Activated CD4-positive, alpha-beta T cell treated with anti-CD3 and anti-CD28 coated beads for 36 hours (primary cell): ENCODE measurements at regions of chr10 and their contacts with region 1.

Region 1: GRCh38 chr10:99732033-99732912 is at the starts of genes COX15 and CUTC:
- DNase-seq: peak; percentile 97
- ATAC-seq: peak; percentile 94
- H3K4me3 Mint-ChIP-seq: peak within 1 kb of the TSS; percentile 93
- H3K27ac Mint-ChIP-seq: peak within 1 kb of the TSS; percentile 98
- H3K4me1 Mint-ChIP-seq: peaks cover 32% of the 10 kb centered on the region
- H3K27me3 Mint-ChIP-seq: no peaks in the 10 kb centered on the region
- total RNA-seq, gene COX15: 28.1 to 35.5 TPM
- total RNA-seq, gene CUTC: 24.6 to 35.8 TPM

Region 2: GRCh38 chr10:99430451-99431189 is 301.7 kb before region 1 on chr10 and contains the start of gene GOT1:
- CTCF ChIA-PET with region 1: interaction called, 5 read pairs
- POLR2A ChIA-PET with region 1: interaction called, 3 read pairs
- intact Hi-C with region 1: loop called (anchors 1 kb)
- DNase-seq: peak; percentile 97
- ATAC-seq: peak; percentile 96
- H3K4me3 Mint-ChIP-seq: peak within 1 kb of the TSS; percentile 94
- H3K27ac Mint-ChIP-seq: peak within 1 kb of the TSS; percentile 98
- H3K4me1 Mint-ChIP-seq: peaks cover 32% of the 10 kb centered on the region
- H3K27me3 Mint-ChIP-seq: no peaks in the 10 kb centered on the region
- total RNA-seq, gene GOT1: 51.7 to 83.5 TPM

Region 3: GRCh38 chr10:99659031-99659867 is 73.0 kb before region 1 on chr10 and contains the start of gene ENTPD7:
- CTCF ChIA-PET with region 1: no interaction called
- POLR2A ChIA-PET with region 1: interaction called, 15 read pairs
- intact Hi-C with region 1: loop called (anchors 1 to 5 kb)
- DNase-seq: peak; percentile 96
- ATAC-seq: peak; percentile 99
- H3K4me3 Mint-ChIP-seq: peak within 1 kb of the TSS; percentile 84
- H3K27ac Mint-ChIP-seq: peak within 1 kb of the TSS; percentile 85
- H3K4me1 Mint-ChIP-seq: peaks cover 22% of the 10 kb centered on the region
- H3K27me3 Mint-ChIP-seq: peaks cover 12% of the 10 kb centered on the region
- total RNA-seq, gene ENTPD7: 2.5 to 2.7 TPM

Region 4: GRCh38 chr10:99750641-99751040 is 18.4 kb after region 1 on chr10:
- CTCF ChIA-PET with region 1: no interaction called
- POLR2A ChIA-PET with region 1: no interaction called
- intact Hi-C with region 1: no loop called
- DNase-seq: no peak
- ATAC-seq: no peak
- H3K4me3 Mint-ChIP-seq: no peak overlapping the region
- H3K27ac Mint-ChIP-seq: no peak overlapping the region
- H3K4me1 Mint-ChIP-seq: no peaks in the 10 kb centered on the region
- H3K27me3 Mint-ChIP-seq: no peaks in the 10 kb centered on the region

Region 5: GRCh38 chr10:100009793-100010676 is 277.8 kb after region 1 on chr10 and contains the start of gene DNMBP:
- CTCF ChIA-PET with region 1: interaction called, 4 read pairs
- POLR2A ChIA-PET with region 1: no interaction called
- intact Hi-C with region 1: loop called (anchors 1 to 5 kb)
- DNase-seq: peak; percentile 91
- ATAC-seq: peak; percentile 91
- H3K4me3 Mint-ChIP-seq: peak within 1 kb of the TSS; percentile 74
- H3K27ac Mint-ChIP-seq: peak within 1 kb of the TSS; percentile 79
- H3K4me1 Mint-ChIP-seq: peaks cover 46% of the 10 kb centered on the region
- H3K27me3 Mint-ChIP-seq: peaks cover 8% of the 10 kb centered on the region
- total RNA-seq, gene DNMBP: 1.9 to 2.4 TPM

Region 6: GRCh38 chr10:100229819-100230422 is 497.6 kb after region 1 on chr10:
- CTCF ChIA-PET with region 1: no interaction called
- POLR2A ChIA-PET with region 1: no interaction called
- intact Hi-C with region 1: loop called in 1 of 2 experiments (anchors 1 kb)
- DNase-seq: no peak
- ATAC-seq: no peak
- H3K4me3 Mint-ChIP-seq: peak overlapping the region; percentile 84
- H3K27ac Mint-ChIP-seq: peak overlapping the region; percentile 78
- H3K4me1 Mint-ChIP-seq: peaks cover 19% of the 10 kb centered on the region
- H3K27me3 Mint-ChIP-seq: no peaks in the 10 kb centered on the region

Region 7: GRCh38 chr10:100286051-100287033 is 554.1 kb after region 1 on chr10 and contains the start of gene BLOC1S2:
- CTCF ChIA-PET with region 1: no interaction called
- POLR2A ChIA-PET with region 1: no interaction called
- intact Hi-C with region 1: loop called in 1 of 2 experiments (anchors 1 kb)
- DNase-seq: peak; percentile 91
- ATAC-seq: peak; percentile 89
- H3K4me3 Mint-ChIP-seq: peak within 1 kb of the TSS; percentile 100
- H3K27ac Mint-ChIP-seq: peak within 1 kb of the TSS; percentile 100
- H3K4me1 Mint-ChIP-seq: peaks cover 24% of the 10 kb centered on the region
- H3K27me3 Mint-ChIP-seq: no peaks in the 10 kb centered on the region
- total RNA-seq, gene BLOC1S2: 45.0 to 45.7 TPM